Heart left ventricle (tissue), 16 donors: ENCODE measurements at regions of chr22 and their contacts with region 1.

Region 1: DNA sequence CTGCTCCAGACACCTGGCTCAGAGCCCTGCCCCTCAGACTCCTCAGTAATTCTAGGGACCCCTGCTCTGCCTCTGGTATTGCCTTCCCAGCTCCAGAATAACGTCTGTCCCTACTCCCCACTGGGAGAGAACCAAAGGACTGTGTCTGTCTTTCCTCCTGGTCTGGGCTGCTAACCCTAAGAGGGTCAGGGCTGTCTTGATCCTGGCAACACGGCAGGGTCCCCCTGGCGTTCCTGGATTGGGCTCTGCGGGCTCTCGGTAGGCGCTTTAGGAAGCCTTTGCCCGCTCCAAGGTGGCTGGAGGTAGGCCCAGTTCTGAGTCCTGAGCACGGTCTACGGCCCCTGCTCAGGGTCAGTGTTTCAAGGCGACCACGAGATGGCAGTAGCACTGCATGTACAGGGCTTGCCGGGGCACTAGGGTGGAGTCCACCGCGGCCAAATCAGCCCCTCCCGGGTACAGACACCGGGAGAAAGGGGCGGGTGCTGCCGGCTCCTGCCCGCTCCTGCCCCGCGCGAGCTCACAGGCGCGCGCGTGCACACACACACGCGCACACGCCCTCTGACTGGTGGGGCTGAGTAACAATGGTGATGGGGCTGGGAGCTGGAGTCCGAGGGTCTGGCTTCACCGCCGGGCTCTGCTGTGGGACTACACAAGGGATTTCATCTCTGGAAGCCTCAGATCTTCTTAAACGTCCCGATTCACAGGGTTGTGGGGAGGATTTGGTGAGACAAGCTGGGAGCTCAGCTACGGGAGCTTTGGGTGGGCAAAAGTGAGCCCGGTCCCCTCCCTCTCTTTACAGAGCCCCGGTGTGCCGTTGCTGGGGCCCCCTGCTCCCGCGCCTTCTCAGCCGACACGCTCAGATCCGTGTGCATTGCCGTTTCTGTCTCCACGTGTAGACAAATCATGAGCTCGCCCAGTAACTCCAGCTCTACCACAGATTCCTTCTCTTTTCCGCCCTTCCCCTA is 30.1 kb upstream of the HMOX1 start:
- DNase-seq: peak; percentile 93 to 96 (median 94)
- ATAC-seq: peak; percentile 89 to 90 (median 90)
- H3K4me3 ChIP-seq: peak overlapping the region; percentile 27 to 69 (median 55)
- H3K27ac ChIP-seq: peak overlapping the region in 11 of 12 donors; percentile 51 to 93 (median 68)
- H3K4me1 ChIP-seq: peaks cover 0 to 47% (median 11%) of the 10 kb centered on the region in 12 donors
- H3K27me3 ChIP-seq: no peaks in the 10 kb centered on the region
- CTCF ChIP-seq: peak; percentile 81 to 99 (median 92)
- POLR2A ChIP-seq: peak in 1 of 2 donors; percentile 48

Region 2: DNA sequence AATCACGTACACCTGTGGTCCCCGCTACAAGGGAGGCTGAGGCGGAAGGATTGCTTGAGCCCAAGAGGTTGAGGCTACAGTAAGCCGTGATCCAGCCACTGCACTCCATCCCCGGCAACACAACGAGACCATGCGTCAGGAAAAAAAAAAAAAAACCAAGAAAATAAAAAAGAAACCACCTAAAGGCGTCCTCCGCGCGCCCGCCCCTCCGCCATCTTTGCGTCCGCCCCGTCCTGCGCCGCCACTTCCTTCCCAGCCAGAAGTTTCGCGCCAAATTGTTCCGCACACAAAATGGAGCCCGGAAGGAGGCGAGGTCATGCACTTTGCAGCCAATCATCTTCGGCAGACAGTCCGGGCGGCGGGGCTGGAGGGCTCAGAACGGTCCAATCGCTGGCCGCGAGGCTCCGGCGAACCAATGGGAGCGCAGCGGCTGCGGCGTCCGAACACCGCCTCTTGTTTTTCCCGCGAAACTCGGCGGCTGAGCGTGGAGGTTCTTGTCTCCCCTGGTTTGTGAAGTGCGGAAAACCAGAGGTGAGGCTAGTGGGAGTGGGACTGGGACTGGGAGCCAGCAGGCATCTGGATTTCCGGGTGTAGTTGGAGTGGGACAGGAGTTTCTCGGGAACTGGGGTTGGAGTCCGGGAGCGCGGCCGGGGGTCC is 49.0 kb after region 1 on chr22 and contains the start of gene MCM5:
- intact Hi-C with region 1: loop called in 2 of 10 experiments (anchors 1 to 5 kb)
- DNase-seq: peak; percentile 98
- ATAC-seq: peak; percentile 99 to 100 (median 99)
- H3K4me3 ChIP-seq: peak within 1 kb of the TSS; percentile 47 to 99 (median 86)
- H3K27ac ChIP-seq: peak within 1 kb of the TSS in 9 of 12 donors; percentile 41 to 86 (median 55)
- H3K4me1 ChIP-seq: peaks cover 0 to 43% (median 9%) of the 10 kb centered on the region in 12 donors
- H3K27me3 ChIP-seq: no peaks in the 10 kb centered on the region
- CTCF ChIP-seq: no peak
- POLR2A ChIP-seq: no peak
- total RNA-seq, gene MCM5: 7.3 to 30.2 (median 12.3) TPM

Region 3: DNA sequence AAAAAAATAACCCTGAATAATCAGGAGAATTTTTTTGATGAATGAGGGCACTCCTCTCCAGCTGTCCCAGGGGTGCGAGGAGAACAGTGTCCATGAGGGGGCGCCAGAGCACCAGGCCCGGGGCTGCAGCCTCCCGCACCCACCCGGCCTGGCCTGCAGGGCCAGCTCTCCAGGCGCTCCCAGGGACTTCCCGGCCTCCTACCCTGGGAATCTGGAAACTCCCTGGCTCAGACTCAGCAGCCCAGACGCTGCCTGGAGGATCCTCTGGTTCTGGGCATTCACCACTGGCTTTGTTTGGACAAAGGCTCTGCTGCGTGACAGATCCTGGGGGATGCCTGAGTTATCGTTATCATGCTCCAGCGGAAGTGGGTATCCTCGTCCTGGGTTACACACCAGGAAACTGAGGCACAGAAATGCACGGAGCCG is 80.1 kb after region 1 on chr22:
- intact Hi-C with region 1: loop called in 2 of 10 experiments (anchors 2 to 5 kb)
- DNase-seq: peak; percentile 87 to 93 (median 91)
- ATAC-seq: peak; percentile 95 to 98 (median 98)
- H3K4me3 ChIP-seq: no peak overlapping the region
- H3K27ac ChIP-seq: peak overlapping the region in 6 of 12 donors; percentile 5 to 67 (median 48)
- H3K4me1 ChIP-seq: peaks cover 0 to 13% (median 7%) of the 10 kb centered on the region in 12 donors
- H3K27me3 ChIP-seq: no peaks in the 10 kb centered on the region
- CTCF ChIP-seq: peak; percentile 94 to 98 (median 96)
- POLR2A ChIP-seq: no peak

Region 4: GRCh38 chr22:35589071-35589952 is 238.5 kb after region 1 on chr22:
- intact Hi-C with region 1: loop called in 4 of 10 experiments (anchors 2 to 5 kb)
- DNase-seq: peak in 2 of 5 donors; percentile 56 to 71
- ATAC-seq: peak in 2 of 4 donors; percentile 6 to 8
- H3K4me3 ChIP-seq: no peak overlapping the region
- H3K27ac ChIP-seq: peak overlapping the region in 11 of 12 donors; percentile 68 to 92 (median 84)
- H3K4me1 ChIP-seq: peaks cover 0 to 72% (median 35%) of the 10 kb centered on the region in 12 donors
- H3K27me3 ChIP-seq: no peaks in the 10 kb centered on the region
- CTCF ChIP-seq: no peak
- POLR2A ChIP-seq: no peak

Region 5: DNA sequence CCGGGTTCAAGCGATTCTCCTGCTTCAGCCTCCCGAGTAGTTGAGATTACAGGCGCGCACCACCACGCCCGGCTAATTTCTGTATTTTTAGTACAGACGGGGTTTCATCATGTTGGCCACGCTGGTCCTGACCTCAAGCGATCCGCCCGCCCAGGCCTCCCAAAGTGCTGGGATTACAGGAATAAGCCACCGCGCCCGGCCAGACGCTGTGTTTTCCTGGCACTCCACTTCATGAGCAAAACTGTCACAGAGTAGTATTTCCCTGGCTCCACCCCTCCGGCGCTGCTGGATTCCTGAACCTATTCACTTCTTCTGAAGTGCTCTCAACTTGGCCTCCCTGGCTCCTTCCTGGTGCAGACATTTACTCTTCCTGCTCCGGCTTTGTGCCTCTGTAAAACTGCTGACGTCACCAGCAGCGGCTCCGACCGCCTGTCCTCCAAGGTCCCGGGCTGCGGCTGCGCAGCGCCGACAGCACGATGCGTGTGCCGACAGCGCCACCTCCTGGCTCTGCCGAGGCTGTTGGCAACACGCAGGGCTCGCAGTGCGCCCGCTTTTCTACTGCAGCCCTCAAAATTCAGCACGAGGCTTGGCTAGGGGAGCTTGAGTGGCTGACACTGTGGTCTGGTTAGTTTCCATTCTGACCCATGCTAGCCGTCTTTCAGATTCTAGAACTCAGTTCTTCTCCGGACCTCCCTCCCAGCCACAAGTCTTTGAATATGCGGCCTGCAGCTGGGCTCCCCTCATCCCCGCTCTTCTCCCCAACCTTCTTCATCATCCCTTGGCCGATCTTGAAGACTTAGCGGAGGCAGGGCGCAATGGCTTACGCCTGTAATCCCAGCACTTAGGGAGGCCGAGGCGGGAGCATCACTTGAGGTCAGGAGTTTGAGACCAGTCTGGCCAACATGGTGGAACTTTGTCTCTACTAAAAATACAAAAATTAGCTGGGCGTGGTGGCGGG is 773.1 kb after region 1 on chr22:
- intact Hi-C with region 1: loop called in 3 of 10 experiments (anchors 5 to 10 kb)
- DNase-seq: peak; percentile 94 to 98 (median 97)
- ATAC-seq: peak; percentile 96 to 99 (median 98)
- H3K4me3 ChIP-seq: peak overlapping the region in 10 of 12 donors; percentile 15 to 51 (median 37)
- H3K27ac ChIP-seq: peak overlapping the region; percentile 53 to 94 (median 86)
- H3K4me1 ChIP-seq: peaks cover 0 to 10% (median 2%) of the 10 kb centered on the region in 12 donors
- H3K27me3 ChIP-seq: no peaks in the 10 kb centered on the region
- CTCF ChIP-seq: peak; percentile 95 to 99 (median 98)
- POLR2A ChIP-seq: peak in 1 of 2 donors; percentile 51